Sciatic nerve (tissue), 2 donors: ENCODE measurements at regions of chr19 and their contacts with region 1.

Region 1: DNA sequence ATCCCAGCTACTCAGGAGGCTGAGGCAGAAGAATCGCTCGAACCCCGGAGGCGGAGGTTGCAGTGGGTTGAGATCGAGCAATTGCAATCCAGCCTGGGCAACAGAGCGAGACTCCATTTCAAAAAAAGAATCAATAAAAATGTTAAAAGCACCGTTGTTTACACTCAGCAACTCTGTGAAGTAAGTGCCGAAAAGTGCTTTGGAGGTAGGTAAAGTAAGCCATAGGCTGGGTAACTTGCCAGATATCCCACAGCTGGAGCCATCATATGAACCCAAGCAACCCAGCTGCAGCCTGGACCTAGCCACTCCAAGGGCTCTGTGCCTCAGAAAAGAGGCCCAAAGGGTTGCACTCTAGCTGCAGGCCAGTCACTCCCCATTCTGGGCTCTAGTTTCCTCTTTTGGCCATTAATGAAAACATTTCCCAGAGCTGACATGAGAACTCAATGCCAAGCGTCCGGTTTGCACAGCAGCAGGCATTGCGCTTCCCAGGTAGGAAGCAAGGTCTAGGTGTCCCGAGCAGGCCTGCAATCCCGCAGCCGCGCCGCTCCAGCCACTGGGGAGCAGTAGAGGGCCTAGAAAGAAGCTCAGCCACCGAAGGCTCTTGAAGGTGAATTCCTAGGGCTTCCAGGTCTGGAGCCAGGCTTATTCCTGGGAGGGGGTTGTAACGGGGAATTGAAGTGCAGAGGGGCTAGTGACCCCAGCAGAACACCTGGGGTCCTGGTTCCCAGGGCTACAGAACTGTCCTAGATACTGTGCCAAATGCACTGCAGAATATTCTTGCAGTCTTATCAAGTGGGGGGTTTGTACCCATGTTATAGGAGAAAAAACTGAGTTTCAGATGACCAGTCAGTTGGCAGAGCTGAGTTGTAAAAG is 4.1 kb upstream of the CD79A start:
- DNase-seq: no peak
- ATAC-seq: no peak

Region 2: DNA sequence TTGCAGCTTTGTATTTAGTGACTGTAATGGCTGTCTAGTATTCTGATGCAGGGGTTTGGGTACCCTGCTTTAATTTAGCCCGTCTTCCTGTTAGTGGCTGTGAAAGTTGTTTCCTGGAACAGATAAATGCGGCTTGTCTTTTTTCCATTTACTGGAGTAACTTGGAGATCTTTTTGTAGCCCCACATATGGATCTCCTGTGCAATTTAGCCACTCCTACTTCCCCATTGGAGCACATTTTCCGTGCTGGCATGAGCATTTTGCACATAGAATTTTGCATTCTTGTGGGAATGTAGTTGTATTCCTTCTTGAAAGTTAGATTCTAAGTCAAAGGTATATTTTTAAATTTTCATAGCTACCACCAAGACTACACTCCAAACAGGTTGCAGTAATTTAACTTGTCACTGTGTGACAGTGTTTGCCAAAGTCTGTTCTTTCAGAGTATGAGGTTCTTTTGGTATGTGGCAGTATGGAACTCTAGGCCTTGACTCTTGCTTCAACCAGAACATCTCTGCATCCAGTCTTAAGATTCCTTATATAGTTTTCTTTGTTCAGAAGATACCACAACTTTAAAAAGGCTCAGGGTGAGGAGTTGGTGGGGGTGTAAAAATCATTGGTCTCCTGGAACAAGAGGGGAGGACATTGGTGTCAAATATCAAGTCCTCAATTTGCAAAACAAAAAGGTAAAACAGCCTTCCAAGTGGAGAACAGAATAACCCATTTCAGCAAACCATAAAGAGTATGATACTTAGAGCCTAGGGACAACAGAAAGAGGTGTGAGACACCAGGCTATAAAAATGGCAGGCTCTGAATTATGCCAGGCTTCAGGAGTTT is 584.1 kb before region 1 on chr19:
- intact Hi-C with region 1: loop called (anchors 10 kb)
- DNase-seq: no peak
- ATAC-seq: no peak

Region 3: GRCh38 chr19:41912899-41913537 is 40.0 kb after region 1 on chr19:
- intact Hi-C with region 1: no loop called
- DNase-seq: no peak
- ATAC-seq: no peak